Right ventricle myocardium inferior (tissue), 1 donor: ENCODE measurements at regions of chr6 and their contacts with region 1.

Region 1: DNA sequence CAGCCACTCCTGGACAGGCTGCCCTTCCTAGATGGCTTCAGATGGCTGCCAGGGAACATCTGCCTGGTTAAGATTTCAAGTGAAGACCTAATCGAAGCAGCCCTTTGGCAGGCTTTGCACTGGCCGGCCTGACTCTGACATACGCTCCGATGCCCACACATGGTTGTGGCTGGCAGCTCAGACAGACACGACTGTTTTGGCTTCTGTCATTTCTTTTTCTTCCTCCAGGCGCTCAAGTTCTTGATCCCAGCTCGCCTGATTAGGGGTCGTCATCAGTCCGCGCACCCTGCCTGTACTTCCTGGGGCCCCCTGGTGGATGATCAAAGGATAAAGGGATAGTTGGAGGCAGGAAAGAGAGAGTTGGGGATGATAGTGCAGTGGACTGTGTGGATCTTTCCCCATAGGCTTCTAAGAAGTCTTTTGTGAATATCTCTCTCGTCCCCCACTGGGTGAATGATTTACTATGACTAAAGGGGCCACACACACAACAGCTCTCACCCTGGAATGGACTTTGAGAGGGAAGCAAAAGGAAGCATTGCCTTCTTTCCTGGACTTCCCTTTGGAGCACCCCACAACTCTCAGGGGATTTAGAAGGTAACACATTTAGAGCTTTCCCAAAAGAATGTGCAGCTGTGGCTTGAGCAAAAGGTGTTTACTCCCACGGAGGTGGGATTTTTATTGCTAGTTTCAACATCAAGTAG is 21.4 kb upstream of the TRAM2 start:
- DNase-seq: peak; percentile 79
- ATAC-seq: peak; percentile 70

Region 2: DNA sequence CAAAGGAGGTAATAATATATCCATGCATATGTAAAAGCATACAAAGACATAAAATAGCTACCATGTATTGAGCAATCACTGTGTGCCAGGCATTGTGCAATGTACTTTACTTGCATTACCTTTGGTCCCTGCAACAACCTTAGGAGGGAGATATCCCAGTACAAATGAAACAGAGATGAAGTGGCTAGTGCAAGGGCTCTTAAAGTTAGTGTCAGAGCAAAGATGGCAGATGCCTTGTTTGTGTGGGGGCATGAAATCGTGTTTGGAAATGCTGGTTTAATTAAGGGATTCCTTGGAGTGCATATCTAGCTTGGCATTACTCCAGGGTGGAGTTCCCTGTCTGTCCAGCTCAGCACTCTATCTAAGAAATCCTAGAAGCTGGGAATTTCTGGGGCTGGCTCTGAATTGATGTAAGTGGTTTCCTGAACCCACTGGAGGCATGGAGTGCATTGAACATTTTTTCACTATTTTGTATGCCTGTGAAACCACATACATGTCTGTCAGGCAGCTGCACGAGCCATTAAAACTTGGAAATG is 226.5 kb before region 1 on chr6:
- intact Hi-C with region 1: no loop called
- DNase-seq: no peak
- ATAC-seq: no peak

Region 3: GRCh38 chr6:52407467-52407866 is 190.8 kb before region 1 on chr6:
- intact Hi-C with region 1: loop called (anchors 2 kb)
- DNase-seq: no peak
- ATAC-seq: peak; percentile 43